Caco-2 (cell line): ENCODE measurements at regions of chr17 and their contacts with region 1.

Region 1: GRCh38 chr17:40113110-40113906 is 8.5 kb upstream of the MSL1 start:
- DNase-seq: peak; percentile 96 to 97
- H3K4me3 ChIP-seq: peak overlapping the region; percentile 42
- H3K4me3 Mint-ChIP-seq: peak overlapping the region; percentile 83
- H3K27ac Mint-ChIP-seq: peak overlapping the region; percentile 94
- H3K4me1 ChIP-seq: peaks cover 70% of the 10 kb centered on the region
- H3K4me1 Mint-ChIP-seq: peaks cover 69% of the 10 kb centered on the region
- H3K27me3 ChIP-seq: no peaks in the 10 kb centered on the region
- H3K27me3 Mint-ChIP-seq: no peaks in the 10 kb centered on the region
- CTCF ChIP-seq: peak; percentile 80 to 90

Region 2: GRCh38 chr17:40062329-40063186 is 50.8 kb before region 1 on chr17 and contains the start of gene THRA:
- CTCF ChIA-PET with region 1: interaction called, 13 read pairs
- POLR2A ChIA-PET with region 1: interaction called, 4 read pairs
- intact Hi-C with region 1: loop called (anchors 1 kb)
- DNase-seq: peak in 1 of 2 experiments; percentile 83
- H3K4me3 ChIP-seq: peak within 1 kb of the TSS; percentile 99
- H3K4me3 Mint-ChIP-seq: peak within 1 kb of the TSS; percentile 78
- H3K27ac Mint-ChIP-seq: peak within 1 kb of the TSS; percentile 23
- H3K4me1 ChIP-seq: peaks cover 26% of the 10 kb centered on the region
- H3K4me1 Mint-ChIP-seq: peaks cover 34% of the 10 kb centered on the region
- H3K27me3 ChIP-seq: no peaks in the 10 kb centered on the region
- H3K27me3 Mint-ChIP-seq: no peaks in the 10 kb centered on the region
- CTCF ChIP-seq: no peak
- total RNA-seq, gene THRA: 27.3 and 29.3 TPM in 2 replicates

Region 3: DNA sequence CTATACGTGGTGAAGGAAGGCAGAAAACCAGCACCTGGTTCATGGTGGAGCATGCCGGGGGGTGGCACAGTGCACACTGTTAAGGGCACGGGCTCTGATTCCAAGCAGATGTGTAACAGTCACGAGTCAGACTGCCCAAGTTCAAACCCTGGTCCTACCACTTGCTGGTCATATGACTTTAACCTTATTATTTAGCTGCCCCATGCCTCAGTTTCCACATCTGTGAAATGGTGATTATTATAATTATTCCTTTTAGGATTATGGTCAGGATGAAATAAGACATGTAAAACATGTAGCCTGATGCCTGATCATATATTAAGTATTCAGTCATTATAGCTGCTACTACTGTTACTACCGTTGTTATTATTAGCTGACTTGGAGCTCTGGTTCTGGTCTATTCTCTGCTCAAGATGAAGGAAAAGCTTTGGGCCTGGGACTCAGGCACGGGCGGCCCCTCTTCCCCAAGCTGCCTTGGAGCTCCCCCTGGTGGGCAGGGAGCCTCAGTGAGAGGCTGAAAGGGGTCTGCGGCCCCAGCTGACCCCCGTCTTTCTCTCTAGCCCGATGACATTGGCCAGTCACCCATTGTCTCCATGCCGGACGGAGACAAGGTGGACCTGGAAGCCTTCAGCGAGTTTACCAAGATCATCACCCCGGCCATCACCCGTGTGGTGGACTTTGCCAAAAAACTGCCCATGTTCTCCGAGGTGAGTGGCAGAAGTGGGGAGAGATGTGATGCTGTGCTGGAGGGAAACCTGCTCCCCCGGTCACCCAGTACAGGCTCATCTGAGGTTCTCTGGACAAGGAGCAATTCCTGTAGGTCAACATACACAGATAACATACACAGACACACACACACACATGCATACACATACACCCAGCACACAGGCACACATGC is 26.9 kb before region 1 on chr17:
- CTCF ChIA-PET with region 1: interaction called, 17 read pairs
- POLR2A ChIA-PET with region 1: interaction called, 3 read pairs
- intact Hi-C with region 1: loop called (anchors 1 kb)
- DNase-seq: peak; percentile 68 to 84
- H3K4me3 ChIP-seq: no peak overlapping the region
- H3K4me3 Mint-ChIP-seq: no peak overlapping the region
- H3K27ac Mint-ChIP-seq: no peak overlapping the region
- H3K4me1 ChIP-seq: peaks cover 3% of the 10 kb centered on the region; the same call in 1 of the 2 replicates
- H3K4me1 Mint-ChIP-seq: peaks cover 4% of the 10 kb centered on the region
- H3K27me3 ChIP-seq: no peaks in the 10 kb centered on the region
- H3K27me3 Mint-ChIP-seq: no peaks in the 10 kb centered on the region
- CTCF ChIP-seq: peak; percentile 87 to 91

Region 4: DNA sequence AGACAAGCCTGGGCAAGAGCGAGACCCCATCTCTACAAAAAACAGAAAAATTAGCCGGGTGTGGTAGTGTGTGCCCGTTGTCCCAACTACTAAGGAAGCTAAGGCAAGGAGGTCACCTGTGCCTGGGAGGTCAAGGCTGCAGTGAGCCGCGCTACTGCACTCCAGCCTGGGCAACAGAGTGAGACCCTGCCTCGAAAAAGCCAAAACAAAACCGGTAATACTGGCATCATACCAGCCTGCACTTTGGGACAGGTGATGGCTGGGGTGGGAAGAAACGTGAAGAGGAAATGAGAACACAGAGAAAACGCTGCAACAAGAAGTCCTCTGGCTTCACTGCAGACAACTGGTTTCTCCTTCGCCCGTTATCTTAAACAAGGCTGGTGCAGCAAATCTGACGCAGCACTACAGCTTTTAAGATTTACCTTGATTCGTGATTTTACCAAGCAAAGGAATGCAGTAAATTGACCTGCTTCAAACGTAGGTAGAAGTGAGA is 26.3 kb after region 1 on chr17:
- CTCF ChIA-PET with region 1: interaction called, 12 read pairs
- POLR2A ChIA-PET with region 1: interaction called, 39 read pairs
- intact Hi-C with region 1: loop called (anchors 1 kb)
- DNase-seq: no peak
- H3K4me3 ChIP-seq: peak overlapping the region; percentile 53
- H3K4me3 Mint-ChIP-seq: peak overlapping the region; percentile 95
- H3K27ac Mint-ChIP-seq: peak overlapping the region; percentile 97
- H3K4me1 ChIP-seq: peaks cover 8% of the 10 kb centered on the region; the same call in 1 of the 2 replicates
- H3K4me1 Mint-ChIP-seq: peaks cover 9% of the 10 kb centered on the region
- H3K27me3 ChIP-seq: no peaks in the 10 kb centered on the region
- H3K27me3 Mint-ChIP-seq: no peaks in the 10 kb centered on the region
- CTCF ChIP-seq: no peak

Region 5: DNA sequence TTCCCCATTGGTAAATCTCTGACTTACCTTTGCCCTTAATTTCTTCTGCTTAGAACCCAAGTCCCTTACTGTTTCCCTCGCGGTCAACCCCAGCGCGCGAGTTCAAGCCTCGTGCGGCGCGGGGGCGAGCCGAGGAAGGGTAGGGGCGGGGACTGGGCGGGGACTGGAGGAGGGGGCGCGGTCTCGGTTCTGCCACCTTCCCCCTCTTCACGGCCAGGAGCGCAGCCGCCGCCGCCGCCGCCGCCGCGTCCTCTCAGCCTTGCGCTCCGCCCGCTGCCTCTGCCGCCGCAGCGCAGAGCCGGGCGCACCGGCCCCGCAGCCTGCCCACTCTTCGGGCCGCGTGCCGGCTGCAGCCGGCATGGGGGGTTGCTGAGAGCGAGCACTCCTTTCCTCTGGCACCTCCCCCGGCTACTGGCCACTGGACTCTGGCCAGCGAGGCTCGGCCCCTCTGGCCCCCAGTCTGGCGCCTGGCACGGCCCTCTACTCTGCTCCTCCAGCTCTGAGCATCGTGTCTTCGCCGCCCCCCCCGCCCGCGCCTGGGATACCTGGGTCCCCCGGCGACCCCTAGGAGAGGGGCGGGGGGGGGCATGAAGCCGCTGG is 64.1 kb after region 1 on chr17 and contains the start of gene RAPGEFL1:
- CTCF ChIA-PET with region 1: interaction called, 7 read pairs
- POLR2A ChIA-PET with region 1: interaction called, 4 read pairs
- intact Hi-C with region 1: loop called (anchors 2 kb)
- DNase-seq: peak; percentile 82 to 86
- H3K4me3 ChIP-seq: peak within 1 kb of the TSS; percentile 68
- H3K4me3 Mint-ChIP-seq: peak within 1 kb of the TSS; percentile 73
- H3K27ac Mint-ChIP-seq: peak within 1 kb of the TSS; percentile 76
- H3K4me1 ChIP-seq: peaks cover 15% of the 10 kb centered on the region
- H3K4me1 Mint-ChIP-seq: peaks cover 21% of the 10 kb centered on the region
- H3K27me3 ChIP-seq: no peaks in the 10 kb centered on the region
- H3K27me3 Mint-ChIP-seq: no peaks in the 10 kb centered on the region
- CTCF ChIP-seq: no peak
- total RNA-seq, gene RAPGEFL1: 13.2 and 15.0 TPM in 2 replicates

Region 6: DNA sequence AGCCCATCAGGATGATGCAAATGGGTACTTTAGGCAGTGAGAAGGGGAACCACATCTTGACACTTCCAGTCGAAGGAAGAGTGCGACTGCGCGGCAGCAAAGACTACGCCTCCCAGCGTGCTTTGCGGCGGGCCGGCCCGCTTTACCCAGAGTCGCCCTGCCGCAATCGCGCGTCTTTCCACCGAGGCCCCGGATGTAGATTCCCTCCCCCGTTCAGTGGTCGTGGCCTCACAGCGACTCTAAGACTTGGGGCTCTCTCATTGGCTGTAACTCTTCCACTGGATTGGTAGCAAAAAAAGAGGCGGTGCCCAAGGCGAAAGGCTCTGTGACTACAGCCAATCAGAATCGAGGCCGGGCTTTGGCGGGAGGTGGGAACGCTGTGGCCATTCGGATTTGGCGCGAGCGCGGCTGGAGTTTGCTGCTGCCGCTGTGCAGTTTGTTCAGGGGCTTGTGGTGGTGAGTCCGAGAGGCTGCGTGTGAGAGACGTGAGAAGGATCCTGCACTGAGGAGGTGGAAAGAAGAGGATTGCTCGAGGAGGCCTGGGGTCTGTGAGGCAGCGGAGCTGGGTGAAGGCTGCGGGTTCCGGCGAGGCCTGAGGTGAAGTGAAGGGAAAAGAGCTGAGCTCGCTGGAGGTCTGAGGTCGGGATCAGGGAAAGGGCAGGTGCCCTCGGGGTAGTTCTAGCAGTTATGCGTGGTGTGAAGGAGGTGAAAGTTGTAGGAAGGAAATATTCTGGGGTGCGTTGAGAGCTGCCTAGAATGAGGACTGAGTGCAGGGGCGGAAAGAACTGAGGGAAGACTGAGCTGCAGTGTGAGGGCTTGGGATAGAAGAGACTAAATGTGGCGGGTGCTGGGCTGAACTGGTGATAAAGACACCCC is 174.4 kb after region 1 on chr17 and contains the start of gene CDC6:
- CTCF ChIA-PET with region 1: interaction called, 9 read pairs
- POLR2A ChIA-PET with region 1: interaction called, 9 read pairs
- intact Hi-C with region 1: loop called (anchors 1 kb)
- DNase-seq: peak; percentile 99 to 100
- H3K4me3 ChIP-seq: peak within 1 kb of the TSS; percentile 90
- H3K4me3 Mint-ChIP-seq: peak within 1 kb of the TSS; percentile 95
- H3K27ac Mint-ChIP-seq: peak within 1 kb of the TSS; percentile 96
- H3K4me1 ChIP-seq: peaks cover 21% of the 10 kb centered on the region
- H3K4me1 Mint-ChIP-seq: peaks cover 7% of the 10 kb centered on the region
- H3K27me3 ChIP-seq: no peaks in the 10 kb centered on the region
- H3K27me3 Mint-ChIP-seq: no peaks in the 10 kb centered on the region
- CTCF ChIP-seq: no peak
- total RNA-seq, gene CDC6: 86.1 and 96.4 TPM in 2 replicates

Region 7: GRCh38 chr17:40612599-40613244 is 499.4 kb after region 1 on chr17:
- CTCF ChIA-PET with region 1: no interaction called
- POLR2A ChIA-PET with region 1: no interaction called
- intact Hi-C with region 1: no loop called
- DNase-seq: no peak
- H3K4me3 ChIP-seq: no peak overlapping the region
- H3K4me3 Mint-ChIP-seq: no peak overlapping the region
- H3K27ac Mint-ChIP-seq: peak overlapping the region; percentile 23
- H3K4me1 ChIP-seq: peaks cover 20% of the 10 kb centered on the region
- H3K4me1 Mint-ChIP-seq: peaks cover 20% of the 10 kb centered on the region
- H3K27me3 ChIP-seq: no peaks in the 10 kb centered on the region
- H3K27me3 Mint-ChIP-seq: no peaks in the 10 kb centered on the region
- CTCF ChIP-seq: no peak